HCT116 (cell line): ENCODE measurements at regions of chr17 and their contacts with region 1.

Region 1: DNA sequence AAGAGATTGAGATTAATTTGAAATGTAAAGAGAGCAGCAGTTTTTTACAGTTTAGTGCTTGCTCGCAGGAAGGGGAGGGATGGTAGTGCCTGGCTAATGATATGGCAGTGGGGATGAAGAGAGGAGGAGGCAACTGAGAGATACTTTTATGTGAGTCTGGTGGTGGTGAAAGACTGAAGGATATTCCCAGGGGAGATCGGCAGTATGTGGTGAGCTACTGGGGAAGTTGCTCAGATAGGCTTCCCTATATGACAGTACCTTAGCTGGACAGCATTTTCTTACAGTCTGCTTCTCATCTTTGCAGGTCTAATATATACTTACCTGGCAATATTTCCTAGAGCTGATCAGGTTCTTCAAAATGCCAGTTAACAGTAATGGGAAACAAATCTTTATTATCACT is 8.6 kb downstream of the CEP95 start:
- DNase-seq: no peak
- ATAC-seq: no peak
- H3K4me3 ChIP-seq: no peak overlapping the region
- H3K27ac ChIP-seq: no peak overlapping the region
- H3K4me1 ChIP-seq: no peaks in the 10 kb centered on the region
- H3K27me3 ChIP-seq: no peaks in the 10 kb centered on the region
- CTCF ChIP-seq: no peak
- POLR2A ChIP-seq: no peak
- RAD21 ChIP-seq: no peak

Region 2: DNA sequence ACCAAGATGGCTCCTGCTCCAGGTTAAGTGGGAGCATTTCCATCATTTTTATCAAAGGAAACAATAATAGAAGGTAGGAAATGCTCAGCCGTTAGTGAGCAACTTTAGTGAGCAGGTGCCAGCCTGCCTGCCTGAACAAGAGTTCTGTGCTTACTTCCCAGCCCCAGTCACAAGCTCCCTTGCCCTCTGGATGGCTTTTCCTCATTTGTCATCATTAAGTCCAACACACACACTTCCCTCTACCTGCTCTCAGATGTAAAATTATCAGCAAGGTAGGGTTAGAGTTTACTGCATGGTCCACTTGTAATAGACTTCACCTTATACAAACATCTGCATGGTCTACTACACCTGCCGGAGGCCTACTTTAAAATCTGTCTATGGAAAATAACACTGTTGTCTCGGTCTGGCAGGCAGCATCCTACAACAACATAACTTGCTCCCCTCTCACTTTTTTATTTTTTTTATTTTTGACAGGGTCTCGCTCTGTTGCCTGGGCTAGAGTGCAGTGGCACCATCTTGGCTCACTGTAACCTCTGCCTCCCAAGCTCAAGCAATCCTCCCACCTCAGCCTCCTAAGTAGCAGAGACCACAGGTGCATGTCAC is 265.1 kb before region 1 on chr17:
- CTCF ChIA-PET with region 1: no interaction called
- POLR2A ChIA-PET with region 1: no interaction called
- RAD21 ChIA-PET with region 1: no interaction called
- intact Hi-C with region 1: no loop called
- DNase-seq: no peak
- ATAC-seq: no peak
- H3K4me3 ChIP-seq: no peak overlapping the region
- H3K27ac ChIP-seq: no peak overlapping the region
- H3K4me1 ChIP-seq: peaks cover 3 to 4% of the 10 kb centered on the region in 2 experiments; a peak in 2 of 4 replicates
- H3K27me3 ChIP-seq: no peaks in the 10 kb centered on the region
- CTCF ChIP-seq: no peak
- POLR2A ChIP-seq: no peak
- RAD21 ChIP-seq: no peak

Region 3: GRCh38 chr17:64554028-64554637 is 38.7 kb after region 1 on chr17:
- CTCF ChIA-PET with region 1: no interaction called
- POLR2A ChIA-PET with region 1: no interaction called
- RAD21 ChIA-PET with region 1: no interaction called
- intact Hi-C with region 1: loop called (anchors 5 kb)
- DNase-seq: no peak
- ATAC-seq: peak; percentile 68
- H3K4me3 ChIP-seq: no peak overlapping the region
- H3K27ac ChIP-seq: no peak overlapping the region
- H3K4me1 ChIP-seq: no peaks in the 10 kb centered on the region
- H3K27me3 ChIP-seq: no peaks in the 10 kb centered on the region
- CTCF ChIP-seq: no peak
- POLR2A ChIP-seq: no peak
- RAD21 ChIP-seq: no peak

Region 4: GRCh38 chr17:64565563-64565962 is 50.1 kb after region 1 on chr17:
- CTCF ChIA-PET with region 1: no interaction called
- POLR2A ChIA-PET with region 1: no interaction called
- RAD21 ChIA-PET with region 1: no interaction called
- intact Hi-C with region 1: no loop called
- DNase-seq: no peak
- ATAC-seq: no peak
- H3K4me3 ChIP-seq: no peak overlapping the region
- H3K27ac ChIP-seq: no peak overlapping the region
- H3K4me1 ChIP-seq: no peaks in the 10 kb centered on the region
- H3K27me3 ChIP-seq: no peaks in the 10 kb centered on the region
- CTCF ChIP-seq: no peak
- POLR2A ChIP-seq: no peak
- RAD21 ChIP-seq: no peak